ENCODE measurements at regions of chr1 and their contacts with region 1.

Region 1: DNA sequence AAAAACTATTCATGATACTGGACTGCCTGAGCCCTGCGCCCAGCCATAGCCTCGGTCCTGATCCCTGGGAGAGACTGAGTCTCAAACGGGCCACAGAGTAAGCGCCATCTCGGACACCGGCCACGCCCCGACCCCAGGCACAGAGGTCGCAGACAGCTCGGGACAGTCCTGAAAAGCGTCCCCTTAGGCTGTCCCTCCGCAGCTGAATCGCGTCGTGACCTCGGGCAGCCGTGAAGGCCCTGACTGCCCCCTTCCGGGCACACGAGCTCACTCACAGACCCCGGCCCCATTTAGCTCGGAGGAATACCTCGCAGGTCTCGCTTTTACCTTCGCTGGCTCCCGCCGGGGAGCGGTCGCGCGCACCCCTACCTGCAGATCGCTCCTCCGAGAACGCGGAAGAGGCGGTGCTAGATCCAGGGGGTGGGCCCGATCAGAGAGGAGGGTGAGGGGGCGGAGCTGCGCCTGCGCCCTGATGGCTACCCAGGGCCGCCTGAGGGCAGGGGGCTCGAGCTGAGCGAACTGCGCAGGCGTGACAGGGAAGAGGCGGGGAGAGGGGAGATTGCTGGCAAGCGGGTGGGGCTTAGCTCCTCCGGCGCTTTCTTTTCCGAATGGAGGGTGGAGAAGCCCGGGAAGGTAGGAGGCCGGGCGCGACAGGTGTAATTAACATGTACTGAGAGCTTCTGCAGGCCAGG is at the start of gene MKNK1:
- DNase-seq: peak; percentile 97 to 100
- H3K4me3 ChIP-seq: peak within 1 kb of the TSS; percentile 70 to 87 (median 79)
- H3K27ac ChIP-seq: no peak within 1 kb of the TSS
- H3K4me1 ChIP-seq: peaks cover 0 to 8% (median 3%) of the 10 kb centered on the region in 4 experiments; a peak in 4 of 7 replicates
- H3K27me3 ChIP-seq: 0 out of 7 replicates have a peak, but pooled peaks cover 0 to 2% (median 0%) of the 10 kb centered on the region in 4 experiments
- CTCF ChIP-seq: peak; percentile 60 to 74 (median 61)
- EP300 ChIP-seq: no peak
- POLR2A ChIP-seq: peak in 1 of 2 experiments; percentile 47; a peak in 1 of 3 replicates
- RAD21 ChIP-seq: peak; percentile 65 to 69
- total RNA-seq, gene MKNK1: 21.5 and 23.9 TPM in 2 replicates

Region 2: GRCh38 chr1:46547481-46548383 is 56.3 kb before region 1 on chr1:
- CTCF ChIA-PET with region 1: interaction called, 11 read pairs
- POLR2A ChIA-PET with region 1: no interaction called
- DNase-seq: no peak
- H3K4me3 ChIP-seq: no peak overlapping the region
- H3K27ac ChIP-seq: no peak overlapping the region
- H3K4me1 ChIP-seq: peaks cover 0 to 30% (median 19%) of the 10 kb centered on the region in 4 experiments; a peak in 6 of 7 replicates
- H3K27me3 ChIP-seq: peaks cover 27 to 44% (median 41%) of the 10 kb centered on the region in 4 experiments
- CTCF ChIP-seq: peak in 2 of 3 experiments; percentile 65 to 66; a peak in 3 of 4 replicates
- EP300 ChIP-seq: no peak
- POLR2A ChIP-seq: no peak
- RAD21 ChIP-seq: peak; percentile 60 to 70

Region 3: GRCh38 chr1:46556822-46557221 is 47.2 kb before region 1 on chr1:
- CTCF ChIA-PET with region 1: interaction called, 17 read pairs
- POLR2A ChIA-PET with region 1: no interaction called
- DNase-seq: no peak
- H3K4me3 ChIP-seq: no peak overlapping the region
- H3K27ac ChIP-seq: no peak overlapping the region
- H3K4me1 ChIP-seq: no peaks in the 10 kb centered on the region; a peak in 1 of 7 replicates
- H3K27me3 ChIP-seq: no peaks in the 10 kb centered on the region; a peak in 1 of 7 replicates
- CTCF ChIP-seq: no peak
- EP300 ChIP-seq: no peak
- POLR2A ChIP-seq: no peak
- RAD21 ChIP-seq: no peak

Region 4: DNA sequence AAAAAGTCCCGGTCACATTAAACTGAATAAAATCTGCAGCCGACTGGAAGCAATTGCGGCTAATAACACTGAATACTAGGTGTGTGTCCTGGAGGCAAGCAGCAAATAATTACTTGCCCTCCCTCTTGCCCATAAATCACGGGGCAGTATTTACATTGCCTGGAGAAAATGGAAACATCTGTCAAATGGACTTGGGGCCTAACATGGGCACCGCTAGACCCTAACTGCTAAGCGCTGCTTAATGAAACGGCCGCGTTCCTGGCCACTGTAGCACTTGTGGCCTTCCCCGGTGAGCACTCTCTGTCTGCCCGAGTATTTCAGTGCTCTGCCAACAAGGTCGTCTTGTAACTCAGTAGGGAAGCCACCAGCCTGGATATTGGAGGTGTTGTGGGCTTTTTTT is 28.7 kb before region 1 on chr1:
- CTCF ChIA-PET with region 1: interaction called, 52 read pairs
- POLR2A ChIA-PET with region 1: no interaction called
- DNase-seq: no peak
- H3K4me3 ChIP-seq: peak overlapping the region in 1 of 4 experiments; percentile 1; a peak in 1 of 8 replicates
- H3K27ac ChIP-seq: no peak overlapping the region
- H3K4me1 ChIP-seq: peaks cover 6 to 11% (median 9%) of the 10 kb centered on the region in 4 experiments; a peak in 6 of 7 replicates
- H3K27me3 ChIP-seq: no peaks in the 10 kb centered on the region
- CTCF ChIP-seq: no peak
- EP300 ChIP-seq: no peak
- POLR2A ChIP-seq: no peak
- RAD21 ChIP-seq: no peak

Region 5: GRCh38 chr1:46581681-46582455 is 22.1 kb before region 1 on chr1:
- CTCF ChIA-PET with region 1: interaction called, 52 read pairs
- POLR2A ChIA-PET with region 1: interaction called, 3 read pairs
- DNase-seq: no peak
- H3K4me3 ChIP-seq: no peak overlapping the region
- H3K27ac ChIP-seq: no peak overlapping the region
- H3K4me1 ChIP-seq: peaks cover 0 to 3% (median under 1%) of the 10 kb centered on the region in 4 experiments; a peak in 2 of 7 replicates
- H3K27me3 ChIP-seq: no peaks in the 10 kb centered on the region
- CTCF ChIP-seq: no peak
- EP300 ChIP-seq: no peak
- POLR2A ChIP-seq: no peak
- RAD21 ChIP-seq: no peak

Region 6: DNA sequence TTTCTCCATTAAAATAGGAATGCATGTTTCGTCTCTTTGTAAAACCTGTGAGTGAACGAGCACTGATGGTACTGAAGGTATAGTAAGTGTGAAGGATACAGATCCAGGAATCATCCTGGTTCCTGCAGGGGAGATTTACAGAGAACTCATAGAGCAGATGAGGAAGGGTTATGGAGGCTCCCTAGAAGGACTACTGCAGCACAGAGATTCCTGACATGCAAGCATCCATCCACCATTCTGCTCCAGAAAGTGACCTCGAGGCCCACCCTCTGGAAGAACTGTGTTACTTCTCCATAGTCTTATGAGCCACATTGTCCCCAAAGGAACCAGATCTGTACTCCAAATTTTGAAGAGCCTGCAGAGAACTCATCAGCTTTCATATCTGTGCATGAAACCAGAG is 14.5 kb before region 1 on chr1:
- CTCF ChIA-PET with region 1: interaction called, 52 read pairs
- POLR2A ChIA-PET with region 1: interaction called, 7 read pairs
- DNase-seq: no peak
- H3K4me3 ChIP-seq: no peak overlapping the region
- H3K27ac ChIP-seq: no peak overlapping the region
- H3K4me1 ChIP-seq: no peaks in the 10 kb centered on the region; a peak in 1 of 7 replicates
- H3K27me3 ChIP-seq: no peaks in the 10 kb centered on the region
- CTCF ChIP-seq: no peak
- EP300 ChIP-seq: no peak
- POLR2A ChIP-seq: no peak
- RAD21 ChIP-seq: no peak

Region 7: GRCh38 chr1:46616277-46617107 is 12.5 kb after region 1 on chr1 and contains the start of gene MOB3C:
- CTCF ChIA-PET with region 1: interaction called, 126 read pairs
- POLR2A ChIA-PET with region 1: interaction called, 15 read pairs
- DNase-seq: peak in 1 of 2 experiments; percentile 72
- H3K4me3 ChIP-seq: peak within 1 kb of the TSS; percentile 47 to 83 (median 82)
- H3K27ac ChIP-seq: no peak within 1 kb of the TSS
- H3K4me1 ChIP-seq: peaks cover 11 to 32% (median 23%) of the 10 kb centered on the region in 4 experiments
- H3K27me3 ChIP-seq: peaks cover 0 to 11% (median 9%) of the 10 kb centered on the region in 4 experiments; a peak in 5 of 7 replicates
- CTCF ChIP-seq: no peak
- EP300 ChIP-seq: no peak
- POLR2A ChIP-seq: no peak
- RAD21 ChIP-seq: no peak
- total RNA-seq, gene MOB3C: 5.1 and 5.8 TPM in 2 replicates